Endothelial cell of umbilical vein (primary cell): ENCODE measurements at regions of chr1 and their contacts with region 1.

Region 1: GRCh38 chr1:51192213-51192843 is 43.7 kb upstream of the RNF11 start:
- DNase-seq: peak; percentile 73
- H3K4me3 ChIP-seq: no peak overlapping the region
- H3K27ac ChIP-seq: no peak overlapping the region
- H3K4me1 ChIP-seq: peaks cover 3% of the 10 kb centered on the region
- H3K27me3 ChIP-seq: peaks cover 0 to 2% of the 10 kb centered on the region in 2 experiments
- CTCF ChIP-seq: peak; percentile 68 to 79
- POLR2A ChIP-seq: no peak

Region 2: GRCh38 chr1:50750021-50750619 is 442.2 kb before region 1 on chr1:
- CTCF ChIA-PET with region 1: interaction called, 22 read pairs
- POLR2A ChIA-PET with region 1: no interaction called
- dilution Hi-C with region 1: no loop called
- intact Hi-C with region 1: loop called (anchors 1 kb)
- DNase-seq: peak; percentile 61
- H3K4me3 ChIP-seq: no peak overlapping the region
- H3K27ac ChIP-seq: no peak overlapping the region
- H3K4me1 ChIP-seq: no peaks in the 10 kb centered on the region
- H3K27me3 ChIP-seq: no peaks in the 10 kb centered on the region
- CTCF ChIP-seq: peak; percentile 32 to 50
- POLR2A ChIP-seq: no peak

Region 3: GRCh38 chr1:50873458-50874187 is 318.7 kb before region 1 on chr1:
- CTCF ChIA-PET with region 1: interaction called, 11 read pairs
- POLR2A ChIA-PET with region 1: no interaction called
- dilution Hi-C with region 1: no loop called
- intact Hi-C with region 1: loop called (anchors 1 kb)
- DNase-seq: peak; percentile 74
- H3K4me3 ChIP-seq: no peak overlapping the region
- H3K27ac ChIP-seq: no peak overlapping the region
- H3K4me1 ChIP-seq: no peaks in the 10 kb centered on the region
- H3K27me3 ChIP-seq: no peaks in the 10 kb centered on the region
- CTCF ChIP-seq: peak; percentile 60 to 63
- POLR2A ChIP-seq: no peak

Region 4: GRCh38 chr1:50968158-50968820 is 224.0 kb before region 1 on chr1:
- CTCF ChIA-PET with region 1: interaction called, 3 read pairs
- POLR2A ChIA-PET with region 1: no interaction called
- dilution Hi-C with region 1: no loop called
- intact Hi-C with region 1: loop called (anchors 2 kb)
- DNase-seq: peak; percentile 94
- H3K4me3 ChIP-seq: peak overlapping the region; percentile 62 to 90 (median 73)
- H3K27ac ChIP-seq: peak overlapping the region; percentile 66
- H3K4me1 ChIP-seq: peaks cover 26% of the 10 kb centered on the region
- H3K27me3 ChIP-seq: no peaks in the 10 kb centered on the region
- CTCF ChIP-seq: peak; percentile 30 to 53
- POLR2A ChIP-seq: peak; percentile 47

Region 5: GRCh38 chr1:51203121-51203873 is 11.0 kb after region 1 on chr1:
- CTCF ChIA-PET with region 1: interaction called, 14 read pairs
- POLR2A ChIA-PET with region 1: no interaction called
- dilution Hi-C with region 1: no loop called
- intact Hi-C with region 1: no loop called
- DNase-seq: no peak
- H3K4me3 ChIP-seq: no peak overlapping the region
- H3K27ac ChIP-seq: no peak overlapping the region
- H3K4me1 ChIP-seq: no peaks in the 10 kb centered on the region
- H3K27me3 ChIP-seq: no peaks in the 10 kb centered on the region
- CTCF ChIP-seq: no peak
- POLR2A ChIP-seq: no peak

Region 6: GRCh38 chr1:51235673-51236530 is 43.6 kb after region 1 on chr1 and contains the start of gene RNF11:
- CTCF ChIA-PET with region 1: interaction called, 4 read pairs
- POLR2A ChIA-PET with region 1: no interaction called
- dilution Hi-C with region 1: no loop called
- intact Hi-C with region 1: loop called (anchors 1 kb)
- DNase-seq: peak; percentile 91
- H3K4me3 ChIP-seq: peak within 1 kb of the TSS; percentile 88 to 98 (median 91)
- H3K27ac ChIP-seq: peak within 1 kb of the TSS; percentile 97
- H3K4me1 ChIP-seq: peaks cover 23% of the 10 kb centered on the region
- H3K27me3 ChIP-seq: no peaks in the 10 kb centered on the region
- CTCF ChIP-seq: peak in 1 of 2 donors; percentile 0
- POLR2A ChIP-seq: peak; percentile 95
- total RNA-seq, gene RNF11: 82.9 and 94.4 TPM in 2 replicates

Region 7: GRCh38 chr1:51535006-51535592 is 342.8 kb after region 1 on chr1:
- CTCF ChIA-PET with region 1: interaction called, 4 read pairs
- POLR2A ChIA-PET with region 1: no interaction called
- dilution Hi-C with region 1: no loop called
- intact Hi-C with region 1: loop called (anchors 2 kb)
- DNase-seq: peak; percentile 89
- H3K4me3 ChIP-seq: no peak overlapping the region
- H3K27ac ChIP-seq: no peak overlapping the region
- H3K4me1 ChIP-seq: peaks cover 10% of the 10 kb centered on the region
- H3K27me3 ChIP-seq: no peaks in the 10 kb centered on the region
- CTCF ChIP-seq: peak; percentile 65 to 83
- POLR2A ChIP-seq: no peak

Region 8: DNA sequence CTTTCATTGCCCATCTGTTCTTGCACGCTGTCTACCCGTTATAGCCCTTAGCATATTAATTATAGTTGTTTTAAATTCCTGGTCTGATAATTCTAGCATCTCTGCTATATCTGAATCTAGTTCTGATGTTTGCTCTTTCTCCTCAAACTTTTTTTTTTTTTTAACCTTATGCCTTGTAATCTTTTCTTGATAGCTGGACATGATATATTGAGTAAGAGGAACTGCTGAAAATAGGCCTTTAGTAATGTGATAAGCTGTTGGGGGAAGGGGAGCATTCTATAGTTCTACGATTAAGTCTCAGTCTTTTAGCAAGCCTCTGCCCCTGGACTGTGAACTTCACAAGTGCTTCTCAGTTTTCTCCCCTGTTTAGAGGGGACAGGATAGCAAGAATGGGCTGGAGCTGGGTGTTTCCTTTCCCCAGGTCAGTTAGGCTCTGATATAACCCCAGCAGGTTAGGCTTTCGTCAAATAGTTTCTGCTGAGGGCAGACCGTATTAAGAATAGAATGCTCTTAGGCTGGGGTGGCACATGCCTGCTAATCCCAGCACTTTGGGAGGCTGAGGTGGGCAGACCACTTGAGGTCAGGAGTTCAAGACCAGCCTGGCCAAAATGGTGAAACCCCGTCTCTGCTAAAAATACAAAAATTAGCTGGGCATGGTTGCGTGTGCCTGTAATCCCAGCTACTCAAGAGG is 1011.8 kb after region 1 on chr1:
- CTCF ChIA-PET with region 1: no interaction called
- POLR2A ChIA-PET with region 1: no interaction called
- dilution Hi-C with region 1: no loop called
- intact Hi-C with region 1: no loop called
- DNase-seq: no peak
- H3K4me3 ChIP-seq: no peak overlapping the region
- H3K27ac ChIP-seq: no peak overlapping the region
- H3K4me1 ChIP-seq: no peaks in the 10 kb centered on the region
- H3K27me3 ChIP-seq: no peaks in the 10 kb centered on the region
- CTCF ChIP-seq: no peak
- POLR2A ChIP-seq: no peak